ENCODE measurements at regions of chr10 and their contacts with region 1.

Region 1: DNA sequence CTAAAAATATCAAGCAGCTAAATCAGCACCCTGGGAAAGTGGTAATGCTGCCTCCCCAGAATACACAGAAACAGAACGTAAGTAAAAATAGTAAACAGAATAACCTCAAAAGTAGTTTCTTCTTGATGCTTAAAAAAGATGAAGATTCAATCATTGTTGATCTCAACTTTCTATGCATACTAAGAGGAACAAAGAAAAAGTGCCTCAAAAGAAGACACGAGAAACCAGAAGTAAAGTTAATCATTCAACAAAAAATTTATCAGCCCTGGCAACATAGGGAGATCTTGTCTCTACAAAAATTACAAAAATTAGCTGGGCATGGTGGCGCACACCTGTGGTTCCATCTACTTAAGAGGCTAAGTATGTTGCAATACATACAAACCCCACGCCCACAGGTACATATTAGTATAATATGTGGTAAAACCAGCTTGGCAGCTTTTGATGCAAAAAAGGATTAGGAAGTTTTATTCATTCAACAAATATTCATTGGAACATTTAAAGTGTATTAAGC is 153.7 kb downstream of the NRBF2 start:
- DNase-seq: peak; percentile 66
- ATAC-seq: peak; percentile 83
- H3K4me3 ChIP-seq: peak overlapping the region; percentile 19; the same call in 1 of the 2 replicates
- H3K27ac ChIP-seq: peak overlapping the region; percentile 73
- H3K4me1 ChIP-seq: peaks cover 32% of the 10 kb centered on the region
- H3K27me3 ChIP-seq: no peaks in the 10 kb centered on the region
- CTCF ChIP-seq: no peak
- EP300 ChIP-seq: peak; percentile 24 to 69; a peak in 1 of 4 replicates
- POLR2A ChIP-seq: no peak
- RAD21 ChIP-seq: no peak

Region 2: DNA sequence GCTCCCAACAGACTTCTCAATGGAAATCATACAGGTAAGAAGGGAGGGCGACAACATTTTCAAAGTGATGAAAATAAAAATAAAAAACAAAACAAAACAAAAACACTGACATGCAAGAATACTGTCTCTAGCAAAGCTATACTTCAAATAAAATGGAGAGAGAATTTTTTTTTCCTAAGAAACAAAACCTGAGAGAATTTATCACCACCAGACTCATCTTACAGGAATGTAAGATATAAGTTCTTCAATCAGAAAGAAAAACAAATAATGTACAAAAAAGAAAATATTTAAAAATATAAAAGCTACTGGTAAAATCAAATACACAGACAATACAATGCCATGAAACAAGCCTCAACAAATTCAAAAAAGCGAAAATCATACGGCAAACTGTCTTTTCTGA is 40.5 kb before region 1 on chr10:
- CTCF ChIA-PET with region 1: no interaction called
- POLR2A ChIA-PET with region 1: no interaction called
- RAD21 ChIA-PET with region 1: no interaction called
- SMC1A ChIA-PET with region 1: no interaction called
- in situ Hi-C with region 1: no loop called
- intact Hi-C with region 1: no loop called
- DNase-seq: no peak
- ATAC-seq: no peak
- H3K4me3 ChIP-seq: no peak overlapping the region
- H3K27ac ChIP-seq: no peak overlapping the region
- H3K4me1 ChIP-seq: peaks cover 25% of the 10 kb centered on the region
- H3K27me3 ChIP-seq: no peaks in the 10 kb centered on the region
- CTCF ChIP-seq: no peak
- EP300 ChIP-seq: no peak
- POLR2A ChIP-seq: no peak
- RAD21 ChIP-seq: no peak

Region 3: GRCh38 chr10:63304146-63304545 is 17.3 kb after region 1 on chr10:
- CTCF ChIA-PET with region 1: interaction called, 5 read pairs
- POLR2A ChIA-PET with region 1: interaction called, 3 read pairs
- RAD21 ChIA-PET with region 1: interaction called, 3 read pairs
- SMC1A ChIA-PET with region 1: interaction called, 10 read pairs
- in situ Hi-C with region 1: no loop called
- intact Hi-C with region 1: no loop called
- DNase-seq: no peak
- ATAC-seq: no peak
- H3K4me3 ChIP-seq: no peak overlapping the region
- H3K27ac ChIP-seq: no peak overlapping the region
- H3K4me1 ChIP-seq: no peaks in the 10 kb centered on the region
- H3K27me3 ChIP-seq: no peaks in the 10 kb centered on the region
- CTCF ChIP-seq: no peak
- EP300 ChIP-seq: no peak
- POLR2A ChIP-seq: no peak
- RAD21 ChIP-seq: no peak